ENCODE measurements at regions of chr19 and their contacts with region 1.

Region 1: GRCh38 chr19:39889872-39890545 is 43.8 kb upstream of the FBL start:
- DNase-seq: no peak
- CTCF ChIP-seq: no peak

Region 2: GRCh38 chr19:39390755-39391592 is 499.0 kb before region 1 on chr19 and contains the starts of genes MED29 and PAF1:
- in situ Hi-C with region 1: no loop called
- DNase-seq: peak; percentile 99
- CTCF ChIP-seq: no peak

Region 3: GRCh38 chr19:40225440-40226305 is 335.7 kb after region 1 on chr19:
- in situ Hi-C with region 1: loop called (anchors 25 kb)
- DNase-seq: no peak
- CTCF ChIP-seq: no peak

Region 4: GRCh38 chr19:40312533-40312932 is 422.5 kb after region 1 on chr19:
- in situ Hi-C with region 1: no loop called
- DNase-seq: no peak
- CTCF ChIP-seq: no peak